Mammary epithelial cell (primary cell): ENCODE measurements at regions of chr11 and their contacts with region 1.

Region 1: DNA sequence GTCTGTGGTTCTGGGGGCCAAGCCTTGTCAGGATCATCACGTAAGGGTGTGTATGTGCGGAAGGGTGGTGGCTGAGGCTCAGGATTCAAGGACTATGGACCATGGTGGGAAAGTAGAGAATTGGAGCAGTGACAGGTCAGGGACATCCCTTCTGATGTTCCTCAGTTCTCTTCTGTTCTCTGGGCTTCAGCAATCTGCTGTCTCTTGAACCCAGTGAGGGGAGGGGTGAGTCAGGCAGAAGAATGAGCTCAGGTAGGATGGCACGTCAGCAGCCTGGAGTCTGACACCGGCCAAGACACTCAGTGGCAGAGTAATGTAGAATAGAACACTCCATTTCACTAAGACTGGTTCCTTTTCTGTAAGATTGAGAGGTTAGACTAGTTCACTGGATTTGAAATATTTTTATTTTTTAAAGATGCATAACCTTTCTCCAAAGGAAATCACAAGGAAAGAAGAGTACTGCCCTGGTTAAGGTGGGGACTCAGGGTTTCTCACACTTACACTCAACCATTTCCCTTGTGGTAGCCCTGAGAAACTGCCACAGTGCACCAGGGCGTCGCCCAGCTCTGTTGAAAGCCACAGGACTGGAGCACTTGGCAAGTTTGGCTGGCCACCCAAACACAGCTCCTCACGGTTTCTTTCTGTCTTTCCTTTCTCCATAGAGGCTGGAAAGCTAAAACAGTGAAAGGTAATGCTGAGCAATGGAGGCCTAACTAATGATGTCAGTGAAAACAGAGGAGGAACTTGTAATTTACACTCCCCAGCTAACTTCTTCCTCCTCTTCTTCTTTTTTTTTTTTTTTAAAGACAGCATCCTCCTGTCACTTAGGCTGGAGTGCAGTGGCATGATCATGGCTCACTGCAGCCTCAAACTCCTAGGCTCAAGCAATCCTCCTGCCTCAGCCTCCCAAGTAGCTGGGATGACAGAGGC is 23.1 kb upstream of the MICAL2 start:
- DNase-seq: peak; percentile 87
- H3K4me3 ChIP-seq: peak overlapping the region in 2 of 3 experiments; percentile 27 to 34
- H3K27ac ChIP-seq: peak overlapping the region; percentile 100
- H3K4me1 ChIP-seq: peaks cover 72% of the 10 kb centered on the region
- H3K27me3 ChIP-seq: no peaks in the 10 kb centered on the region
- CTCF ChIP-seq: peak; percentile 18 to 44

Region 2: DNA sequence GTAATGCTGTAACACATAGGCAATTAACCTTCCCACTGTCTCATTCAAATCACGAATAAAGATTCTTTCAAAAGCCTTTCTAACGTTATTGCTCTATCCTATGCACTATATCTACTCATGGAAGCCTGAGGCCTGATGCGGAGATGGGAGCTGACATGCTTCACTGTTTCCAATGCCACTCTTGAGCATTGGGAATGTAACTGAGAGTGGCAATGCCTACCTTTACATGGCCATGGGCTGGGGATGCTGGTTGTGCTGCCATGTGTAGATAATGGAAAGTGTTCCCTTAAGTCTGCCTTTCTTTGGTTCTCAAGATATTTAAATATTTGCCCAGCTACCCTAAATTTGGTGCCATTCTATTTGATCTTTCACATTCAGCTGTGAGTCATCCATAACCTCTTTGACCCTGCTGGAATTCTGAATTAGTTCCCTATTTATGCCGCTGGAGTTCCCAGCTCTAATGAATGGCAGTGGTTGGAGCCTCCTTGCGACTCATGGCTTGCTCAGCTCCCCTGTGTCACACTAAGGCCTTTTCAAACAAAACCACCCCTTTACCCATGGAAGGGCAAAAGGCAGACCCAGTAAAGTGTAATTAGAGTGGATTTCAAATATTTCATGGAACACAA is 57.5 kb before region 1 on chr11:
- CTCF ChIA-PET with region 1: no interaction called
- dilution Hi-C with region 1: no loop called
- in situ Hi-C with region 1: no loop called
- intact Hi-C with region 1: no loop called
- DNase-seq: peak; percentile 69
- H3K4me3 ChIP-seq: no peak overlapping the region
- H3K27ac ChIP-seq: no peak overlapping the region
- H3K4me1 ChIP-seq: peaks cover 7% of the 10 kb centered on the region
- H3K27me3 ChIP-seq: no peaks in the 10 kb centered on the region
- CTCF ChIP-seq: no peak

Region 3: DNA sequence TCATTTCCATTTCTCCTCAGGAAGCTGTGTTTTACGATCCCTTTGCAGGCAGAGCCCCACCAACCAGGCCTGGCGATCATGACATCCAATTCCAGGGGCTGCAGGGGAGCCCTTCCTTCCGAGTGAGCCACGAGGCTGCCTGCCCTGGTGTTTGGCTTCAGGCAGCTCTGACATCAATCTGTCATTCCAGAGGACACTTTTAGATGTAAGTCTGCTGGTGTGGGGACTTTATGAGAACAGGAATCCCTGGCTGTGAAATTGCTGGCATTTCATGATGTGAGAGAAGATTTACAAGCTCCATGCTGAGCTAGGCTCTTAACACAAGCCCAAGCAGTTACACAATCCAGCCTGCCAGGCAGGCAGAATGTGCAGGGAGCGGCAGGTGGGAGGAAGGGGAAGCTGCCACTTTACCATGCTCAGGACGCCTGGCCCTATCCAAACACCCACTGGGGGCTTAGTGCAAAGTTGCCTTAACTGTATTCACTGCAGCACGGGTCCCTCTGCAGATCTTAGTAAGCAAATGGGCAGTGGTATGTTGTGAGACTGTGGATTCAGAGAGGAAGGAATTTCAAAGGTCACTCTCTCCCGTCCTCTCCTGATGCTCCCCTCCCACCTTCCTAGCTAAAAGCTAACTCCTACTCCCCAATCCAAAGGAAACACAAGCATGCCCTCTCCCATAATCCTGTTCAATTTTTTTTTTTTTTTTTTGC is 20.4 kb before region 1 on chr11:
- CTCF ChIA-PET with region 1: interaction called, 10 read pairs
- dilution Hi-C with region 1: no loop called
- in situ Hi-C with region 1: no loop called
- intact Hi-C with region 1: loop called (anchors 1 kb)
- DNase-seq: peak; percentile 49
- H3K4me3 ChIP-seq: no peak overlapping the region
- H3K27ac ChIP-seq: peak overlapping the region; percentile 91
- H3K4me1 ChIP-seq: peaks cover 41% of the 10 kb centered on the region
- H3K27me3 ChIP-seq: no peaks in the 10 kb centered on the region
- CTCF ChIP-seq: no peak

Region 4: DNA sequence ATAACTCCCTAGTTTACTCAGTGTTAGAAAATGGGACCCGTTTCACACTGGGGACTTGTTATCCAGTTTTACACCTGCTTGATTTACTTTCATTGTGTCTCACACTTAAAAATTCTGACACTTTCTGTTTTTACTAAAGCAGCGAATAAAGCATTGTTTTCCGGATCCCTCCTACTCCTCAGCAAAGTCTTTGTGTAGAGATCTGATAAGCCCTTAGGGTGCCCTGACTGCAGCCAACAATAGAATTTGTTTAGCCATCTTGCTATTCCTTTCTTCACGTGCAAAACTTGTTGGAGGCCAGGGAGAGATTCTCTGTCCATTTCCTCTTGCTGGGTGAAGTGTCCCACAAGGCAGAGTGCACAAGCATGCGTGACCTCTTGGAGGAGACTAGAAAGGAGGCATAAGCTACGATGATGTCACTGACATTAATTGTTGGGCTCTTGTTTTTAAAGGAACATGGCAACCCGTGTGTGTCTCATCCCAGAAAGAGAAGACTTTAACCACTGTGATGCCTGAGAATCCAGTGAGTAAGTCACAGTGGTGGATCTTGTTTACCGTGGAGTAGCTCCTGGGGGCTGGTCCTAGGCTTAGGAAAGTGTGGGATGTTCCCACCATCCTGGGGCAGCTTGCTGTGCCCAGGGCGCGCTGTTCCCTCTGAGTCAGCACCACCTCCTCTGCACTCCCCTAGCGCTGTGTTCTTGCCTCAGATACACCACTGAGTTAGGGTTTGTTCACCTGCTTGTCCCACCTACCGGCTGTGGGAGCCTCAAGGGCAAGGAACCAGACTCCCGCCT is 50.8 kb after region 1 on chr11:
- CTCF ChIA-PET with region 1: no interaction called
- dilution Hi-C with region 1: no loop called
- in situ Hi-C with region 1: no loop called
- intact Hi-C with region 1: loop called (anchors 2 kb)
- DNase-seq: peak; percentile 97
- H3K4me3 ChIP-seq: no peak overlapping the region
- H3K27ac ChIP-seq: peak overlapping the region; percentile 84
- H3K4me1 ChIP-seq: peaks cover 51% of the 10 kb centered on the region
- H3K27me3 ChIP-seq: no peaks in the 10 kb centered on the region
- CTCF ChIP-seq: no peak

Region 5: DNA sequence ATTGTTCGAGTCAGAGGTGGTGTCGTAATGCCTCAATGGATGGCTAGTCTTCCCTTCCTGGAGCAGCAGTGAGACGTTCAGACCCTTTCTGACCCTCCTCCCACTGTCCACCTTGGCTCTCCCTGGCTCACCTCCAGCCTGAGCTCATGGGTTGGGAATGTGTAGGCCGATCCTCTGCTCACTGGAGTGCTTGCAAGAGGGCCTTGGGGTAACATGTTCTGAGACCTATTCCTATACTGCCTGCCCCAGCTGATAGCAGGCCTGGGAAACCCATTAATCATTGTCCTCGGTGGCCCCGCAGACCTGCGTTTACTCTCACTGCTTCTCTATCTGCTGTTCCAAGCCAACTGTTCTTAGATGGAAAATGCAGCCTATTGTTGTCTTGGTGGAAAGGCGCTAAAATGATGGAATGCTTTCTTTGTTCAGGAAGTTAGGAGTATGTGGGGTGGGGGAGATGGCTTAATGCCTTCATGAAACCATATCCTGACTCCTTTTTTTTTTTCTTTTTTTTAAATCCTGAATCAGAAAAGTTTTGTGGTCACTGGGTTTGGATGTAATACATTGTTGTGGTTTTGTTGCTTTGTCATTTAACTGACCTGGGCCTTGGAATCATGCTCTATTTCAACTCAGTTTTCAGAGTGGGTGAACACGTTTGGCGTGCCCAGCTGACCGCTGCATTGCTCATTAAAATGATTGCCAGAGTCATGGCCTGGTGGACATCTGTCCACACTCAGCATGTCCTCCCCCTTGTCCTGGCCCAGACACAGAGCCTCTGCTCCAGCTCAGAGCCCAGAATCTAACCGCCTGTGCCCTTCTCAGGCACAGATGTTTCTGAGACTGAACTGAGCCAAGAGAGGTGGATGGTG is 95.6 kb after region 1 on chr11:
- CTCF ChIA-PET with region 1: no interaction called
- dilution Hi-C with region 1: loop called (anchors 5 kb)
- in situ Hi-C with region 1: no loop called
- intact Hi-C with region 1: no loop called
- DNase-seq: peak; percentile 90
- H3K4me3 ChIP-seq: no peak overlapping the region
- H3K27ac ChIP-seq: peak overlapping the region; percentile 96
- H3K4me1 ChIP-seq: peaks cover 80% of the 10 kb centered on the region
- H3K27me3 ChIP-seq: no peaks in the 10 kb centered on the region
- CTCF ChIP-seq: no peak

Region 6: DNA sequence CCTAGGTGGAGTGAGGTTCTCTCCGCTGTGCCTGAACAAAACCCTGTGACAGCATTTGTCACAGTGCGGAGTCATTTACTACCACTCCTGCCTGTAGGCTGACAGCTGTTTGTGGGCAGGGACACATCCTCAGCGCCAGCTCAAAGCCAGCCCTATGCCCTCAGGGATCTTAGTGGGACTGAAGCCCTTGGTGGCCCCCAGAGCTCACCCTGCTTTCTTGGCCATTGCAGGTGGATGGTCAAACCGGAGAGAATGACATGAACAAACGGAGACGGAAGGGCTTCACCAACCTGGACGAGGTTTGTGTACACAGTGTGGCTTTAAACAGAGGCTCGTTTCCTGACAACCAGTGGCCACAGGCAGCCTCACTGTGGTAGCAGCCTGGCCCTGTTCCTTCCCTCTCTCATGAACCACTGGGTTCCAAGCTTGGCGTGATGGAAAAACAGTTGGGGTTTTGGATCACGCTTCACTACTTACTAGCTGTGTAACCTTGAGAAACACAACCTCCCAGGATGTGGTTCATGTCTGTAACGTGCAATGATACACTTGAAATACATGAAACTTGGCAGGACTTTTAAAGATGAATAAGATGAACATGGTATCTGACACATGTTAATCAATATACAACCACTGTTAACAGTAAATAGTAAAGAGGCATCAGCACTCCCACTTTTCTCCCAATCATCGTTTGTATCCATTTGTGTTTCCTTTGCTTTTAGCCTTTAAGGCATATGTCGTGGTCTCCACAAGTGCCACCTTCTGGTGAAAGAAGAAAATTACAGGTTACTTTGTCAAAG is 148.8 kb after region 1 on chr11:
- CTCF ChIA-PET with region 1: interaction called, 3 read pairs
- dilution Hi-C with region 1: no loop called
- in situ Hi-C with region 1: no loop called
- intact Hi-C with region 1: loop called (anchors 1 kb)
- DNase-seq: peak; percentile 47
- H3K4me3 ChIP-seq: no peak overlapping the region
- H3K27ac ChIP-seq: peak overlapping the region; percentile 24
- H3K4me1 ChIP-seq: peaks cover 33% of the 10 kb centered on the region
- H3K27me3 ChIP-seq: no peaks in the 10 kb centered on the region
- CTCF ChIP-seq: peak; percentile 57 to 66

Region 7: DNA sequence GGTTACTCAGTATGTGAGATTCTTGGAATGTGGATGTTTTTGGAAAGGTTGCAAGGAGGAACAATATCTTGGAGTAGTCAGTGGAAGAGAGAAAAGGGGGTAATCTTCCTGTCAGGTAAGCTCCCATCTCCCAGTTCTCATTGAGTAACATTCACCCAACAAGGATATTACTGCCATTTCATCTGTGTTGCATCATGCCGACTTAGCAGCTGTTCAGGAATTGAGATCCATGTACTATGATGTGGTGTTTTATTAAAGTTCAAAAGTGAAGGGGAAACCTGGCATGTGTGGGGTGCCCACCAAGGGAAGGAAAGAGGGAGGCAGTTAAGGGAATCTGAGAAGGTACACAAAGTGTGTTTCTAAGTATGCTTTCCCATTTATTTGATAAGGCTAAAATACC is 863.3 kb after region 1 on chr11:
- CTCF ChIA-PET with region 1: no interaction called
- dilution Hi-C with region 1: no loop called
- in situ Hi-C with region 1: no loop called
- intact Hi-C with region 1: no loop called
- DNase-seq: no peak
- H3K4me3 ChIP-seq: no peak overlapping the region
- H3K27ac ChIP-seq: no peak overlapping the region
- H3K4me1 ChIP-seq: no peaks in the 10 kb centered on the region
- H3K27me3 ChIP-seq: no peaks in the 10 kb centered on the region
- CTCF ChIP-seq: no peak